HCT116 (cell line): ENCODE measurements at regions of chr12 and their contacts with region 1.

Region 1: GRCh38 chr12:8544295-8544694 is 3.6 kb upstream of the CLEC4E start:
- DNase-seq: peak; percentile 35
- ATAC-seq: peak; percentile 91
- H3K4me3 ChIP-seq: no peak overlapping the region
- H3K27ac ChIP-seq: no peak overlapping the region
- H3K4me1 ChIP-seq: no peaks in the 10 kb centered on the region
- H3K27me3 ChIP-seq: no peaks in the 10 kb centered on the region; the same call in 1 of the 2 replicates
- CTCF ChIP-seq: peak; percentile 49 to 88 (median 82); a peak in 5 of 6 replicates
- POLR2A ChIP-seq: no peak
- RAD21 ChIP-seq: peak; percentile 66

Region 2: DNA sequence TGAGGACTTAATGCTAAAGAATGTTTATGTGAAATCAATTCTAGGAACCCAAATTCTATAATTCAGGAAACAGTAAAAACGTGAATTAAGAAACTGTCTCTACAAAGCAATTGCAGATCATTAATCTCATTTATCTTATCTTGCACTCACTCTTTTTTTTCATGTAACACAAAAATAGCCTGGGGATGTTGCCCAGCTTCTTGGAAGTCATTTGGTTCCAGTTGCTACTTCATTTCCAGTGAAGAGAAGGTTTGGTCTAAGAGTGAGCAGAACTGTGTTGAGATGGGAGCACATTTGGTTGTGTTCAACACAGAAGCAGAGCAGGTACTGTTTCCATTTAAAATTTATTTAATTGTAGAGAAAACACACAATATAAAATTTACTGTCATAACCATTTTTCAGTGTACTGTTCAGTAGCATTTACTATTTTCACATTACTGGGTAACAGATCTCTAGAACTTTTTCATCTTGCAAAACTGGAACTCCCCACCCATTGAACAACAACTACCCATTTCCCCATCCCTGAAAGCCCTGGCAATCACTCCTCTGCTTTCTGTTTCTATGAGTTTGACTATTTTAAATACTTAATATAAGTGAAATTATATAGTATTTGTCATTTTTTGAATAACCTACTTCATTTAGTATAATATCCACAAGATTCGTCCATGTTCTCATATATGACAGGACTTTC is 78.8 kb before region 1 on chr12:
- CTCF ChIA-PET with region 1: no interaction called
- POLR2A ChIA-PET with region 1: no interaction called
- RAD21 ChIA-PET with region 1: no interaction called
- intact Hi-C with region 1: no loop called
- DNase-seq: no peak
- ATAC-seq: no peak
- H3K4me3 ChIP-seq: no peak overlapping the region
- H3K27ac ChIP-seq: no peak overlapping the region
- H3K4me1 ChIP-seq: no peaks in the 10 kb centered on the region
- H3K27me3 ChIP-seq: peaks cover 16% of the 10 kb centered on the region; the same call in 1 of the 2 replicates
- CTCF ChIP-seq: no peak
- POLR2A ChIP-seq: no peak
- RAD21 ChIP-seq: no peak

Region 3: GRCh38 chr12:8527250-8528130 is 16.8 kb before region 1 on chr12:
- CTCF ChIA-PET with region 1: interaction called, 24 read pairs
- POLR2A ChIA-PET with region 1: no interaction called
- RAD21 ChIA-PET with region 1: no interaction called
- intact Hi-C with region 1: no loop called
- DNase-seq: no peak
- ATAC-seq: no peak
- H3K4me3 ChIP-seq: no peak overlapping the region
- H3K27ac ChIP-seq: no peak overlapping the region
- H3K4me1 ChIP-seq: no peaks in the 10 kb centered on the region
- H3K27me3 ChIP-seq: peaks cover 38% of the 10 kb centered on the region
- CTCF ChIP-seq: no peak
- POLR2A ChIP-seq: no peak
- RAD21 ChIP-seq: no peak

Region 4: GRCh38 chr12:8577879-8578278 is 33.6 kb after region 1 on chr12:
- CTCF ChIA-PET with region 1: interaction called, 11 read pairs
- POLR2A ChIA-PET with region 1: no interaction called
- RAD21 ChIA-PET with region 1: no interaction called
- intact Hi-C with region 1: no loop called
- DNase-seq: no peak
- ATAC-seq: no peak
- H3K4me3 ChIP-seq: no peak overlapping the region
- H3K27ac ChIP-seq: no peak overlapping the region
- H3K4me1 ChIP-seq: no peaks in the 10 kb centered on the region
- H3K27me3 ChIP-seq: no peaks in the 10 kb centered on the region
- CTCF ChIP-seq: 0 out of 6 replicates have a peak, but pooled peaks of 1 of the 3 experiments have one; percentile 11
- POLR2A ChIP-seq: no peak
- RAD21 ChIP-seq: no peak

Region 5: GRCh38 chr12:8655421-8655820 is 111.1 kb after region 1 on chr12:
- CTCF ChIA-PET with region 1: interaction called, 27 read pairs
- POLR2A ChIA-PET with region 1: interaction called, 4 read pairs
- RAD21 ChIA-PET with region 1: interaction called in 1 of 2 experiments, 3 read pairs
- intact Hi-C with region 1: no loop called
- DNase-seq: no peak
- ATAC-seq: no peak
- H3K4me3 ChIP-seq: no peak overlapping the region
- H3K27ac ChIP-seq: no peak overlapping the region
- H3K4me1 ChIP-seq: 0 out of 4 replicates have a peak, but pooled peaks cover 0 to 3% of the 10 kb centered on the region in 2 experiments
- H3K27me3 ChIP-seq: no peaks in the 10 kb centered on the region
- CTCF ChIP-seq: no peak
- POLR2A ChIP-seq: no peak
- RAD21 ChIP-seq: no peak

Region 6: DNA sequence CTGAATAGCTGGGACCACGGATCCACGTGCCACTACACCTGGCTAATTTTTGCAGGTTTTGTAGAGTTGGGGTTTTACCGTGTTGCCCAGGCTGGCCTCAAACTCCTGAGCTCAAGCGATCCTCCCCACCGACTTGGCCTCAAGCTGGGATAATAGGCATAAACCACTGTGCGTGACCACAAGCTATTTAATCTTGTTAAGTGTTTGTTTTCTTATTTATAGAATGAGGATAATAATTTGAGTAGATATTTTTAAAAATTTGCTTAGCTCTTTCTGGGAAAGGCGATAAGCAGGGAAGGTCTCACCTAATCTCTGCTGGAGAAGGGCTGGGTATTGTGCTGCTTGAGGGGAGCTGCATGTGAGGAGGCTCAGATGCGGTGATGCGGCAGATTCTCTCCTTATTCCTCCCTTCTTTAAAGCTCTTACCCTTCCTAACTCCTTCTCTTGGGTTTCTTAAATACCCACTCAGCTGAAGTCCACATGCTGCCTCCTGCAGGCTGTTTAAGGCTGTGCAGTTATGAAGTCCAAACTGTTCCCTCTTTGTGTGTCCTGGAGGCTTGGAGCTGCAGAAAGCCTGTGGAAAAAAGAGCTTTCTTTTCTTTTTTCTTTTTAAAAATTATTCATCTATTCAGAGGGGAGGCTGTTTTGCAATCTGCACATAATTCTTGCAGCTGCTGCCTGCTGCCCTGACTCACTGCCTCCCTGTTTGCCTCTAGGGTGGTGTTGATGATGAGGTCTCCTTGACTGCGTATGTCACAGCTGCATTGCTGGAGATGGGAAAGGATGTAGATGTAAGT is 316.1 kb after region 1 on chr12:
- CTCF ChIA-PET with region 1: interaction called, 15 read pairs
- POLR2A ChIA-PET with region 1: no interaction called
- RAD21 ChIA-PET with region 1: no interaction called
- intact Hi-C with region 1: no loop called
- DNase-seq: peak; percentile 27
- ATAC-seq: peak; percentile 82
- H3K4me3 ChIP-seq: no peak overlapping the region
- H3K27ac ChIP-seq: no peak overlapping the region
- H3K4me1 ChIP-seq: no peaks in the 10 kb centered on the region
- H3K27me3 ChIP-seq: no peaks in the 10 kb centered on the region
- CTCF ChIP-seq: peak; percentile 44 to 79 (median 65); a peak in 5 of 6 replicates
- POLR2A ChIP-seq: no peak
- RAD21 ChIP-seq: peak; percentile 44

Region 7: GRCh38 chr12:9039397-9039977 is 495.2 kb after region 1 on chr12:
- CTCF ChIA-PET with region 1: interaction called, 10 read pairs
- POLR2A ChIA-PET with region 1: no interaction called
- RAD21 ChIA-PET with region 1: no interaction called
- intact Hi-C with region 1: no loop called
- DNase-seq: peak; percentile 18
- ATAC-seq: peak; percentile 84
- H3K4me3 ChIP-seq: no peak overlapping the region
- H3K27ac ChIP-seq: no peak overlapping the region
- H3K4me1 ChIP-seq: no peaks in the 10 kb centered on the region
- H3K27me3 ChIP-seq: 0 out of 2 replicates have a peak, but pooled peaks cover 4% of the 10 kb centered on the region
- CTCF ChIP-seq: peak; percentile 55 to 77 (median 57); a peak in 5 of 6 replicates
- POLR2A ChIP-seq: no peak
- RAD21 ChIP-seq: peak; percentile 78